Calu3 (cell line): ENCODE measurements at regions of chr6 and their contacts with region 1.

Region 1: DNA sequence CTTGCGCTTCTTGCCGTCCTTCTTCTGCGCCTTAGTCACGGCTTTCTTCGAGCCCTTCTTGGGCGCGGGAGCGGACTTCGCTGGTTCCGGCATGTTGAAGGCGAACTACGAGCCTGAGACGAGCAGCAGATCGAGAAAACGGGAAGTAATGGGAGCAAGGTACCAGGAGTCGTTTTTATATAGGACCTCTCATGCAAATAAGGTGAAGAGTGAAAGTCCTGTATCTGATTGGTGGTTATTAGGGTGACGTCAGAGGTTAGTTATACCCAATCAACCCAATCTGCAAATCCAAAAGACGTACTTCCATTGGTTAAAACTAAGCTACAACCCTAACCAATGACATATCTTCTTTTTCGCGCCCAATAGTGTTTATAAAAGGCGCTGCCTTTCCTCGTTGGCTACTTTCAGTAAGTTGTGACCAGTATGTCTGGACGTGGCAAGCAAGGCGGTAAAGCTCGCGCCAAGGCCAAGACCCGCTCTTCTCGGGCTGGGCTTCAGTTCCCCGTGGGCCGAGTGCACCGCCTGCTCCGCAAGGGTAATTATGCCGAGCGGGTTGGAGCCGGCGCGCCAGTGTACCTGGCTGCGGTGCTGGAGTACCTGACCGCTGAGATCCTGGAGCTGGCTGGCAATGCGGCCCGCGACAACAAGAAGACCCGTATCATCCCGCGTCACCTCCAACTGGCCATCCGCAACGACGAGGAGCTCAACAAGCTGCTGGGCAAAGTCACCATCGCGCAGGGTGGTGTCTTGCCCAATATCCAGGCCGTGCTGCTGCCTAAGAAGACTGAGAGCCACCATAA is 100.6 kb upstream of the PRSS16 start:
- DNase-seq: peak; percentile 89
- H3K4me3 Mint-ChIP-seq: no peak overlapping the region
- H3K27ac Mint-ChIP-seq: no peak overlapping the region
- H3K4me1 Mint-ChIP-seq: no peaks in the 10 kb centered on the region
- H3K27me3 Mint-ChIP-seq: no peaks in the 10 kb centered on the region
- CTCF ChIP-seq: no peak

Region 2: GRCh38 chr6:26743157-26743821 is 403.6 kb before region 1 on chr6:
- CTCF ChIA-PET with region 1: no interaction called
- intact Hi-C with region 1: no loop called
- DNase-seq: no peak
- H3K4me3 Mint-ChIP-seq: no peak overlapping the region
- H3K27ac Mint-ChIP-seq: no peak overlapping the region
- H3K4me1 Mint-ChIP-seq: no peaks in the 10 kb centered on the region
- H3K27me3 Mint-ChIP-seq: no peaks in the 10 kb centered on the region
- CTCF ChIP-seq: no peak

Region 3: GRCh38 chr6:27126815-27127537 is 19.9 kb before region 1 on chr6:
- CTCF ChIA-PET with region 1: interaction called, 16 read pairs
- intact Hi-C with region 1: loop called (anchors 1 kb)
- DNase-seq: peak; percentile 90
- H3K4me3 Mint-ChIP-seq: peak overlapping the region; percentile 66
- H3K27ac Mint-ChIP-seq: peak overlapping the region; percentile 65
- H3K4me1 Mint-ChIP-seq: peaks cover 18% of the 10 kb centered on the region
- H3K27me3 Mint-ChIP-seq: no peaks in the 10 kb centered on the region
- CTCF ChIP-seq: peak; percentile 85

Region 4: GRCh38 chr6:27132532-27133280 is 14.2 kb before region 1 on chr6:
- CTCF ChIA-PET with region 1: interaction called, 10 read pairs
- intact Hi-C with region 1: loop called (anchors 1 kb)
- DNase-seq: peak; percentile 92
- H3K4me3 Mint-ChIP-seq: no peak overlapping the region
- H3K27ac Mint-ChIP-seq: no peak overlapping the region
- H3K4me1 Mint-ChIP-seq: no peaks in the 10 kb centered on the region
- H3K27me3 Mint-ChIP-seq: no peaks in the 10 kb centered on the region
- CTCF ChIP-seq: no peak

Region 5: DNA sequence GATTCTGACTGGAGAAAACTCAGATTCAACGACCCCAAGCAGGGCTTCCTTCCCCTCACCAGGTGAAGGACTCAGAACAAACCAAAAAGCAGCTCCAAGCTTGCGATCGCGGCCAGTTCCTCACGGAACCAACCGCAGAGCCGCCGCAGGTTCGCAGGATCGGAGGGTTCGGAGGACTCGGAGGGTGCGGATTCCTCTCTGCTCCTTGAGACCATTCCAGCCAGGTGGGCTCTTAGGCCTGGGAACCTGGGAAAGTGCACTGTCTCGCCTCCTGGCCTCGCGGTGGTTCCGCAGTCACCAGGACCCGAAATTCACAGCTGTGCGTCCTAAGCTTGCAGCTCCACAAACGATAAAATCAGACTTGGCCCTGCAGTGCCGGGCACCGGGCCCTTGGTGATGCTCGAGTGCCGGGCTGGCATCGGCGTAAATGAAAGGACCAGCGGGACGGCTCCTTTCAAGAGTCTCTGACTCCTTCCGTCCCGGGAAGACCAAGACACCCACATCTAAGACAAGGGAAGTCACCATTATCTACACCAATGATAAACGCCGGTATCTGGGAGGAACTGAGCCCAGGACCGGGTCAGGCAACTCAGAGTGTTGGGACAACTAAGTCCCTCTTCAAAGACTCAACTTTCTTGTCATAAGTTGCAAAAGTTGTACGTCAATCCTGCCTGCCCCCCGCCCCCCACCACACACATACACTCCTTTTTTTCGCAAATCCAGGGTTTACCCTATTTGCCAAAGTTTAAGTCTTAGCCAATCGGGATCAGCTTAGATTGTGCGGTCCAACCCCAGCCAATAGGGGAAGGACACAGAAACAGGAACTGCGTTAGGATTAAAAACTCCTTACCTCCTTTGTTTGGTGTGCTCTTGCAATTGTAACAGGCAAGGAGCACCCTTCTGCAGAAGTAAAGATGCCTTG is 30.8 kb after region 1 on chr6:
- CTCF ChIA-PET with region 1: interaction called, 12 read pairs
- intact Hi-C with region 1: no loop called
- DNase-seq: peak; percentile 92
- H3K4me3 Mint-ChIP-seq: peak overlapping the region; percentile 86
- H3K27ac Mint-ChIP-seq: peak overlapping the region; percentile 99
- H3K4me1 Mint-ChIP-seq: no peaks in the 10 kb centered on the region
- H3K27me3 Mint-ChIP-seq: peaks cover 20% of the 10 kb centered on the region
- CTCF ChIP-seq: peak; percentile 45

Region 6: GRCh38 chr6:27809939-27810767 is 663.2 kb after region 1 on chr6:
- CTCF ChIA-PET with region 1: interaction called, 11 read pairs
- intact Hi-C with region 1: loop called (anchors 2 kb)
- DNase-seq: peak; percentile 87
- H3K4me3 Mint-ChIP-seq: peak overlapping the region; percentile 89
- H3K27ac Mint-ChIP-seq: peak overlapping the region; percentile 99
- H3K4me1 Mint-ChIP-seq: peaks cover 22% of the 10 kb centered on the region
- H3K27me3 Mint-ChIP-seq: no peaks in the 10 kb centered on the region
- CTCF ChIP-seq: no peak